ENCODE measurements at regions of chr9 and their contacts with region 1.

Region 1: GRCh38 chr9:23145467-23145866 is 680.6 kb downstream of the ELAVL2 start:
- DNase-seq: no peak
- CTCF ChIP-seq: no peak

Region 2: DNA sequence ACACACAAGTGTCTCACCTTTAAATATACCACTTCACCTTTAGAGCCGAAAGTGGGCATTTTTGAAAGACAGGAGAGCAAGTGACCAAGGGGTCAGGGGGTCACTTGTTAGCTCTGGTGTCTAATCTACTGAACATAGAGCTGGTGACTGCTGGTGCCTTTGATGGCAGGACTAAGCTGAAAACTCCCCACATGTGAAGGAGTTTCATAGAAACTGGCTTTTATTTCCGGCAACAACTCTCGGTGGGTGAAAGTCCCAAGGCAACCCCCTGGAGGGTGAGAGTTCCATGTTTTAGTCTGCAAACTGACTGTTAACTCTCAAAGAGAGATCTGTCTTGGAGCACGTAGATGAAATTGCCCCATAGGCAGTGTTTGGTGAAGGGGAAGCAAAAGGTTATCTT is 231.9 kb before region 1 on chr9:
- in situ Hi-C with region 1: no loop called
- DNase-seq: peak; percentile 4
- CTCF ChIP-seq: no peak

Region 3: DNA sequence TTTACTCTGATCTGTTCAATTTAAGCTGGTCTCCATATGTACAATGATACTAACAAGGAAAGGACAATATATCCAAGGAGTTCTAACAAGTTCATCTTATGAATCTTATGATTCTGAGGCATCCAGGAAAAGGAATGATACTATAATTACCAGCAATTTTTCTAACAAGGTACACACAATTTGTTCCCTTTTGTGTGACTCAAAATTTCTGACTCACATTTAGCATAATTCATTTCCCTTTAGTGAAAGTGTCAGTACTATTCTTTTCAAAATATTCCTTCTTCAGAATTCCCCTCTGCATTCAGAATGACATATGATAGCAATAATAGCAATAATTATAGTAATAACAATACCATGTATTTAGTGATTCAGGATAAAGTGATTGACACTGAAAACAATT is 104.0 kb before region 1 on chr9:
- in situ Hi-C with region 1: no loop called
- DNase-seq: no peak
- CTCF ChIP-seq: no peak

Region 4: DNA sequence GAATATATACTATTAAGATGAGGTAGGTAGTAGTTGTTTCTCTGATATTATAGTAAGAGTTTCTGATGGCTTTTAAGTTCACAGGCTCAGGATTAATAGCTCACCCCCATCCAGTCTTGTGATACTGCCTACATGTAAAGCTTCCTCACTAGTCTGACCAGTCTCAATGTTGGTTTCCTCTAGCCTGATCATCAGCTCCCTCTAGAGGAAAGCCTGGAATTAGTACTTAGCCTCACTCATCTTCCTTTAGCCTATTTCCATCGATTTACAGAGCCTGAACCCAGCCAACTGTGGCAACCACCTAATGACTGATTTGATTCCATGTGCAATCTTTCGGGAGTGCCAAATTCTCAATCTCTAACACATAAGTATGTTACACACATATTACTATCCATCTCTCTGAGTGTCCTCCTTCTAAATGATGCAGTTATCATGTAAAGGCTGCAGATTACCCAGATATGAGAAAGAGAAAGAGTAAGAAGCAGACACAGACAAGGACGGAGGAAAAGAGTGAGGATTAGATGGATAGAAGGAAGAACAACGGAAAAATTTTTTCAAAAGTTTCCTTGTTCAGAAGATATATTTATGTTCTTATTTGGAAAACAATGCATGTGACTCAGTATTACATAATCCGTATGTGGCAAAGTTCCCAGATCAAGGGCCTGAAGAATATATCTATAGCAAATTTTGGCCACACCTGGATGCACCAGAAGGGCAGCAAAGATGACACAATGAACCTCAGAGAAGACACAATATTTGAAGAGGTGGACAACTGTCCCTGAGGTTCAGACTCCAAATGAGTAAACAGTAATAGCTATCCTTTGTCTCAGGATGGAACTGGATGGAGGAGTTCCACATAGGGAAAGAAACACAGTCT is 346.9 kb after region 1 on chr9:
- in situ Hi-C with region 1: loop called (anchors 25 kb)
- DNase-seq: peak; percentile 18
- CTCF ChIP-seq: peak; percentile 58

Measured in GM13977 (cell line).